ENCODE measurements at regions of chr1 and their contacts with region 1.

Region 1: DNA sequence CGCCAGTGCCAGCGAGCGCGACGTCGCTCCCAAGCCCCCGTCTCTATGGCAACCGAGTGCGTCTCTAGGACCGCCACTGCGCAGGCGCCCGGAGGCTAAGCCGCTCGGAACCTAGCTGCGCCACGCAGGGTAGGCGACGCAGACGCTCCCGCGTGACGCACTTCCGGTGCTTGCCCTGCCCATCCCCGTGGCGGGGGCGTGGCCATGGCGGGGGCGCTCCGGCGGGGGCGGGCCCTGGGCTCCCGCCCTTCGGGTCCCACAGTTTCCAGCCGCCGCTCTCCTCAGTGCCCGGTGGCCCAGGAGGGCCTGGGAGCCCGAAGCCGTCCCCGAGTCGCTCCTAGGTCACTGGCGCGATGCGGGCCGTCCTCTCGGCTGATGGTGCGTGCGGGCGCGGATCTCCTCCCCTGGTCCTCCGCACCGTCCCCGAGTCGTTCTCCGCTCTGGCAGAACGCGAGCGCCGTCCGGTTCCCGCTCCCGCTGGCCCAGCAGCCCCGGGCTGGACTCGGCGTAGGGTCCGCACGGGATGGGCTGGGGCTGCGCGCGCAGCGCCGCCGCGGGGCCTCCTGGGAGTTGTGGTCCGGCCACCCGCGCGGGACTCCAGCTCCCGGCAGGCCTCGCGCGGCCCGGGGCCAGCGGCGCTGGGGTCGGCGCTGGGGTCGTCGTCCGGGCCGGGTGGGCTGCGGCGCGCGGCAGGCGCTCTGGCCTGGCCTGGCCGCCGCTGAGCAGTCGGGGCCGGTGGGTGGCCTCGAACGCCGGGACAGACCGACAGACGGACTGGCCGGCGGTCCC is at the start of gene MIB2:
- DNase-seq: peak; percentile 98
- ATAC-seq: peak; percentile 90
- H3K4me3 ChIP-seq: peak within 1 kb of the TSS; percentile 36 to 98 (median 97)
- H3K4me3 Mint-ChIP-seq: peak within 1 kb of the TSS; percentile 89
- H3K27ac ChIP-seq: peak within 1 kb of the TSS; percentile 100
- H3K27ac Mint-ChIP-seq: peak within 1 kb of the TSS; percentile 92
- H3K4me1 ChIP-seq: peaks cover 20% of the 10 kb centered on the region in 2 donors
- H3K4me1 Mint-ChIP-seq: peaks cover 26% of the 10 kb centered on the region
- H3K27me3 ChIP-seq: no peaks in the 10 kb centered on the region
- H3K27me3 Mint-ChIP-seq: no peaks in the 10 kb centered on the region
- CTCF ChIP-seq: no peak
- total RNA-seq, gene MIB2: 95.9 and 98.1 TPM in 2 replicates

Region 2: GRCh38 chr1:1399187-1399871 is 216.1 kb before region 1 on chr1 and contains the start of gene CCNL2:
- CTCF ChIA-PET with region 1: no interaction called
- POLR2A ChIA-PET with region 1: no interaction called
- intact Hi-C with region 1: loop called (anchors 1 kb)
- DNase-seq: peak; percentile 99
- ATAC-seq: peak; percentile 96
- H3K4me3 ChIP-seq: peak within 1 kb of the TSS; percentile 79 to 96 (median 92)
- H3K4me3 Mint-ChIP-seq: peak within 1 kb of the TSS; percentile 94
- H3K27ac ChIP-seq: peak within 1 kb of the TSS; percentile 70 to 85
- H3K27ac Mint-ChIP-seq: peak within 1 kb of the TSS; percentile 91
- H3K4me1 ChIP-seq: peaks cover 23 to 29% of the 10 kb centered on the region in 2 donors
- H3K4me1 Mint-ChIP-seq: peaks cover 49% of the 10 kb centered on the region
- H3K27me3 ChIP-seq: no peaks in the 10 kb centered on the region
- H3K27me3 Mint-ChIP-seq: no peaks in the 10 kb centered on the region
- CTCF ChIP-seq: peak; percentile 67
- total RNA-seq, gene CCNL2: 347 and 367 TPM in 2 replicates

Region 3: DNA sequence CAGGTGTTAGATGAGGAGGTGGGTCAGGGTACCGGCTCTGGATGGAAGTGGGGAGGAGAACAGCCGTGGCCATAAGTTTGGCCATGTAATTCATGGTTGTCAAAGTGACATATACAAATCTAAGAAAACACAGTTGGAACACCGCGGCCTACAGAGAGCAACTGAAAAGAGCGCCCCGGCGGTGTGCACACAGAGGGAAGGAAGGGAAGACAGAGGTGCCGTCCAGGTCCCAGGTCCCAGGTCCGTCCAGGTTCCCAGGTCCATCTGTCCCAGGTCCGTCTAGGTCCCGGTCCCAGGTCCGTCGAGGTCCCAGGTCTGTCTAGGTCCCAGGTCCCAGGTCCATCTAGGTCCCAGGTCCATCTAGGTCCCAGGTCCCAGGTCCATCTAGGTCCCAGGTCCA is 203.8 kb before region 1 on chr1:
- CTCF ChIA-PET with region 1: no interaction called
- POLR2A ChIA-PET with region 1: no interaction called
- intact Hi-C with region 1: no loop called
- DNase-seq: no peak
- ATAC-seq: no peak
- H3K4me3 ChIP-seq: no peak overlapping the region
- H3K4me3 Mint-ChIP-seq: no peak overlapping the region
- H3K27ac ChIP-seq: no peak overlapping the region
- H3K27ac Mint-ChIP-seq: no peak overlapping the region
- H3K4me1 ChIP-seq: peaks cover 10 to 13% of the 10 kb centered on the region in 2 donors
- H3K4me1 Mint-ChIP-seq: peaks cover 20% of the 10 kb centered on the region
- H3K27me3 ChIP-seq: no peaks in the 10 kb centered on the region
- H3K27me3 Mint-ChIP-seq: no peaks in the 10 kb centered on the region
- CTCF ChIP-seq: no peak

Region 4: GRCh38 chr1:1574721-1575537 is 40.5 kb before region 1 on chr1 and contains the start of gene SSU72:
- CTCF ChIA-PET with region 1: no interaction called
- POLR2A ChIA-PET with region 1: interaction called, 3 read pairs
- intact Hi-C with region 1: loop called (anchors 1 kb)
- DNase-seq: peak; percentile 97
- ATAC-seq: peak; percentile 85
- H3K4me3 ChIP-seq: peak within 1 kb of the TSS; percentile 83 to 99 (median 92)
- H3K4me3 Mint-ChIP-seq: peak within 1 kb of the TSS; percentile 96
- H3K27ac ChIP-seq: peak within 1 kb of the TSS; percentile 99
- H3K27ac Mint-ChIP-seq: peak within 1 kb of the TSS; percentile 99
- H3K4me1 ChIP-seq: peaks cover 11 to 27% of the 10 kb centered on the region in 2 donors
- H3K4me1 Mint-ChIP-seq: peaks cover 30% of the 10 kb centered on the region
- H3K27me3 ChIP-seq: peaks cover 0 to 4% (median 1%) of the 10 kb centered on the region in 4 experiments
- H3K27me3 Mint-ChIP-seq: no peaks in the 10 kb centered on the region
- CTCF ChIP-seq: no peak
- total RNA-seq, gene SSU72: 111 and 112 TPM in 2 replicates

Region 5: DNA sequence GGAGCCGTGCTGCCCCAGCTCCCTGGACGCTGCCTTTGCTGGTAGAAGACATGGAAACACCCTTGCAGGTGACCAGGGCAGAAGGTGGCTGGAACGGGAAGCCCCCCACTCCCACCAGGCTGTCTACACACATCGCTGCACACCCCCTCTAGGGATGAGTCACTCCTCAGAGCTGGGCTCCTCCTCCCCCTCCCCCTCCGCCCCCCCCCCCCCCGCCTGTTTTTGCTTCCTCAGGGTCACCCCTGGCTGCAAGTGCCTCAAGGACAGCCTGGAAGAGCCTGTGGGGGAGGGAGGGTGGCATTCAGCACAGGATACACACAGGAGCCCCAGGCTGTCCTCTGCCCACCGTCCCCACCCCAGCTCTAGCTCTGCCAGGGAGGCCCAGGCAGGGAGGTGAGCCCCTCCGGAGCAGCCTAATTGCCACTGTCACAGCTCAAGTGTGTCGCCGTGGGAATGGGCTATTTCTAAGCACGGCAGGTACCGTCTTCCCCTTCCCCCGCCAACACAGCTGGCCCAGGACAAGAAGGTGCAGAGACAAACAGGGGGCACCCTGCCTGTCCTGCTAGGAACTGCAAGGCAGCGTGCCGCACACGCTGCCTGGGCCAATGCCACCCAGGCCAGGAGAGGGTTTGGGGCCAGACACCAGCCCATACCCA is 18.0 kb before region 1 on chr1:
- CTCF ChIA-PET with region 1: no interaction called
- POLR2A ChIA-PET with region 1: no interaction called
- intact Hi-C with region 1: no loop called
- DNase-seq: peak; percentile 59
- ATAC-seq: peak; percentile 32
- H3K4me3 ChIP-seq: no peak overlapping the region
- H3K4me3 Mint-ChIP-seq: peak overlapping the region; percentile 37
- H3K27ac ChIP-seq: no peak overlapping the region
- H3K27ac Mint-ChIP-seq: no peak overlapping the region
- H3K4me1 ChIP-seq: peaks cover 11 to 26% of the 10 kb centered on the region in 2 donors
- H3K4me1 Mint-ChIP-seq: peaks cover 20% of the 10 kb centered on the region
- H3K27me3 ChIP-seq: peaks cover 0 to 32% (median 7%) of the 10 kb centered on the region in 4 experiments
- H3K27me3 Mint-ChIP-seq: peaks cover 11% of the 10 kb centered on the region
- CTCF ChIP-seq: peak; percentile 25

Region 6: GRCh38 chr1:1630271-1630964 is 15.0 kb after region 1 on chr1:
- CTCF ChIA-PET with region 1: interaction called, 13 read pairs
- POLR2A ChIA-PET with region 1: interaction called, 19 read pairs
- intact Hi-C with region 1: loop called (anchors 2 kb)
- DNase-seq: peak; percentile 97
- ATAC-seq: peak; percentile 74
- H3K4me3 ChIP-seq: peak overlapping the region in 3 of 5 experiments; percentile 35 to 55 (median 50)
- H3K4me3 Mint-ChIP-seq: peak overlapping the region; percentile 98
- H3K27ac ChIP-seq: peak overlapping the region in 1 of 2 donors; percentile 66
- H3K27ac Mint-ChIP-seq: peak overlapping the region; percentile 99
- H3K4me1 ChIP-seq: peaks cover 15 to 21% of the 10 kb centered on the region in 2 donors
- H3K4me1 Mint-ChIP-seq: peaks cover 4% of the 10 kb centered on the region
- H3K27me3 ChIP-seq: peaks cover 0 to 13% (median 4%) of the 10 kb centered on the region in 4 experiments
- H3K27me3 Mint-ChIP-seq: peaks cover 3% of the 10 kb centered on the region
- CTCF ChIP-seq: no peak

Region 7: DNA sequence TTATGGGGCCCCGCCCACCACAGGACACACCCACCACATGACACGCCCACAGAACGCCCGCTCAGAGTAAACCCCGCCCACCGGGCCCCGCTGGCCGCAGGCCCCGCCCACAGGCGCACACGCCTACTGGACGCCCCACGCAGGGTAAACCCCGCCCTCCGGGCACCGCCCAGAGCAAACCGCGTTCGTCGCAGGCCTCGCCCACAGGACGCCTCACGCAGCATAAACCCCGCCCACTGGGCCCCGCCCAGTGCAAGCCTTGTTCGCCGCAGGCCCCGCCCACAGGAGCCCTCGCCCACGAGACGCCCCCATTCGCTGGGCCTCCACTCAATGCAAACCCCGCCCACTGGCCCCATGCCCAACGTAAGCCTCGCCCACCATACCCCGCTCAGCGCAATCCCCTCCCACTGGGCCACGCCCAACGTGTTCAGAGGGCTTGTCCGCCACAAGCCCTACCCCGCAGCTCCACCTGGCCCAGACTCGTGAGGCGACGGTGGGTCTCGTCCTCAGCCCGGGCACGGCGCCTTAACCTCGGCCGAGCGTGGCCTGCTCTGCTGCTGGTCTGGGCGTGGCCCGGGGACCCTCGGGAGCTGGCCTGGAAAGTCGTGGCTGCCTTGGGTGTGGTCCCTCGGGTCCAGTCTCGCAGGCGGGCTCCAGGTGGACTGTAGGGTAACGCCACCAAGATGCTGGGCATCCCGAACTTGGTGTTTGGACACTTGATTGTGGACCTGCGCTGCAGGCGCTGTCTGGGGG is 304.0 kb after region 1 on chr1:
- CTCF ChIA-PET with region 1: no interaction called
- POLR2A ChIA-PET with region 1: no interaction called
- intact Hi-C with region 1: loop called (anchors 1 kb)
- DNase-seq: peak; percentile 100
- ATAC-seq: peak; percentile 88
- H3K4me3 ChIP-seq: peak overlapping the region in 4 of 5 experiments; percentile 37 to 67 (median 60)
- H3K4me3 Mint-ChIP-seq: peak overlapping the region; percentile 79
- H3K27ac ChIP-seq: peak overlapping the region in 1 of 2 donors; percentile 51
- H3K27ac Mint-ChIP-seq: peak overlapping the region; percentile 62
- H3K4me1 ChIP-seq: peaks cover 12 to 22% of the 10 kb centered on the region in 2 donors
- H3K4me1 Mint-ChIP-seq: peaks cover 4% of the 10 kb centered on the region
- H3K27me3 ChIP-seq: peaks cover 0 to 18% (median 0%) of the 10 kb centered on the region in 4 experiments
- H3K27me3 Mint-ChIP-seq: peaks cover under 1% of the 10 kb centered on the region
- CTCF ChIP-seq: no peak

Region 8: DNA sequence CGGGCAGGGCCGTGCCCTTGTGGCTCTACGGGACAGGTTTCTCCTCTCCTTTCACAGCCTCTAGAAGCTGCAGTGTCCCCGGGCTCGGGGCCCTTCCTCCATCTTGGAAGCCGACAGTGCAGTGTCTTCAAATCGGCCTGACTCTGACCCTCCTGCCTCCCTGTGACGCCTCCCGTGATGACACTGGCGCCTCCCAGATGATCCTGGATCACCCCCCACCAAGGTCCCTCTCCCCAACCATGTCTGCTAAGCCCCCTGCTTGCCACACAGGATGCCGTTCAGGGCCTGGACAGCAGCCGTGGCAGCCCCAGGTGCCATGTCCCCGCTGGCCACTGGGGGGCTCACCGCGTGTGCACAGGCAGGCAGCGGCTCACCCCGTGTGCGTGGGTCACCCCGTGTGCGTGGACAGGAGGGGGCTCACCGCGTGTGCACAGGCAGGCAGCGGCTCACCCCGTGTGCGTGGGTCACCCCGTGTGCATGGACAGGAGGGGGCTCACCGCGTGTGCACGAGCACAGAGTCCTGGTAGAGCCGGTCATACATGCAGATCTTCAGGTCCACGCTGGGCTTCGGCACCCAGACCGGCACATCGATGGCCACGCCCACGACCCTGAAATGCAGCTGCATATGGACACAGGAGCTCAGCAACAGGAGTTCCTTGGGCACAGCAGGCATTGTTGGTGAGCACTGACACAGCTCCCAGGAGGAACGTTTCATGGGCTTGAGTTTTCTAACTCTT is 328.6 kb after region 1 on chr1:
- CTCF ChIA-PET with region 1: no interaction called
- POLR2A ChIA-PET with region 1: no interaction called
- intact Hi-C with region 1: no loop called
- DNase-seq: peak; percentile 68
- ATAC-seq: peak; percentile 90
- H3K4me3 ChIP-seq: no peak overlapping the region
- H3K4me3 Mint-ChIP-seq: peak overlapping the region; percentile 56
- H3K27ac ChIP-seq: no peak overlapping the region
- H3K27ac Mint-ChIP-seq: no peak overlapping the region
- H3K4me1 ChIP-seq: peaks cover 2 to 8% of the 10 kb centered on the region in 2 donors
- H3K4me1 Mint-ChIP-seq: peaks cover 8% of the 10 kb centered on the region
- H3K27me3 ChIP-seq: peaks cover 0 to 7% (median 0%) of the 10 kb centered on the region in 4 experiments
- H3K27me3 Mint-ChIP-seq: peaks cover 3% of the 10 kb centered on the region
- CTCF ChIP-seq: peak; percentile 91